ENCODE measurements at regions of chr16 and their contacts with region 1.

Region 1: DNA sequence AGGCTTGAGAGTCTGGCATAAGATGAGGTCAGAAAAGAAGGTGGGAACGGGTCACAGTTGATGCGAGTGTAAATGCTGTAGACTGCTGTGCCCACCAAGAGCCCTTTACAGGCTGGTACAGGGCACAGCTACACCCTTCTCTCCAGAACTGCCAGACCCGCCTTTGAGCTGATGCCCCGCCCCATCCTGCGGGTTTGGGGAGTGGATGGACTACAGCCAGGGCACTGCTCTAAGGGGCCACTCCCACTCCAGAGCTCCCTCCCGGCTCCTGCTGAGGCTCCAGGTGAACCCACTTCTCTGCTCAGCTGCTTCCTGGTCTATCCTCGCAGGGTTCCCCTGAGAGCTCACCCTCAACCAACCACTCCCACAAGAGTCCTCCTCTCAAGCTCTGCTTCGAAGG is 12.3 kb downstream of the MEIOB start:
- DNase-seq: no peak
- H3K4me3 ChIP-seq: no peak overlapping the region
- CTCF ChIP-seq: no peak
- POLR2A ChIP-seq: no peak

Region 2: GRCh38 chr16:1899641-1900451 is 40.2 kb after region 1 on chr16:
- intact Hi-C with region 1: no loop called
- DNase-seq: no peak
- H3K4me3 ChIP-seq: no peak overlapping the region
- CTCF ChIP-seq: no peak
- POLR2A ChIP-seq: no peak

Region 3: GRCh38 chr16:1929578-1930337 is 70.1 kb after region 1 on chr16:
- intact Hi-C with region 1: loop called (anchors 10 kb)
- DNase-seq: peak; percentile 81 to 97
- H3K4me3 ChIP-seq: no peak overlapping the region
- CTCF ChIP-seq: peak; percentile 39 to 91 (median 82)
- POLR2A ChIP-seq: no peak

Region 4: GRCh38 chr16:2090777-2091546 is 231.3 kb after region 1 on chr16:
- intact Hi-C with region 1: no loop called
- DNase-seq: peak in 1 of 2 donors; percentile 70
- H3K4me3 ChIP-seq: no peak overlapping the region
- CTCF ChIP-seq: no peak
- POLR2A ChIP-seq: no peak

Measured in lower leg skin (tissue), 4 donors.